ENCODE measurements at regions of chr12 and their contacts with region 1.

Region 1: DNA sequence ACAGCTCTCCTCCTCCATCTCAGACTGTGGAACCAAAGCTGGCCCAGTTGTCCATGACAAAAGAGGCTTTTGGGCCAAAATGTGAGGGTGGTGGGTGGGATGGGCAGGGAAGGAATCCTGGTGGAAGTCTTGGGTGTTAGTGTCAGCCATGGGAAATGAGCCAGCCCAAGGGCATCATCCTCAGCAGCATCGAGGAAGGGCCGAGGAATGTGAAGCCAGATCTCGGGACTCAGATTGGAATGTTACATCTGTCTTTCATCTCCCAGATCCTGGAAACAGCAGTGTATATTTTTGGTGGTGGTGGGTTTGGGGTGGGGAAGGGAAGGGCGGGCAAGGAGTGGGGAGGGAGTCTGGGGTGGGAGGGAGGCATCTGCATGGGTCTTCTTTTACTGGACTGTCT is 11.8 kb upstream of the TAMALIN start:
- DNase-seq: no peak
- ATAC-seq: no peak
- H3K4me3 Mint-ChIP-seq: no peak overlapping the region
- H3K27ac Mint-ChIP-seq: no peak overlapping the region
- H3K4me1 Mint-ChIP-seq: peaks cover 3% of the 10 kb centered on the region
- H3K27me3 Mint-ChIP-seq: no peaks in the 10 kb centered on the region
- CTCF ChIP-seq: no peak

Region 2: GRCh38 chr12:52010152-52010622 is 15.2 kb after region 1 on chr12:
- CTCF ChIA-PET with region 1: interaction called, 1,431 read pairs
- POLR2A ChIA-PET with region 1: no interaction called
- DNase-seq: peak; percentile 81
- ATAC-seq: peak; percentile 75
- H3K4me3 Mint-ChIP-seq: no peak overlapping the region
- H3K27ac Mint-ChIP-seq: 0 out of 2 replicates have a peak overlapping the region, but pooled peaks have one; percentile 42
- H3K4me1 Mint-ChIP-seq: peaks cover 41% of the 10 kb centered on the region
- H3K27me3 Mint-ChIP-seq: peaks cover 68% of the 10 kb centered on the region
- CTCF ChIP-seq: no peak

Measured in WTC11 (cell line).